ENCODE measurements at regions of chr3 and their contacts with region 1.

Region 1: DNA sequence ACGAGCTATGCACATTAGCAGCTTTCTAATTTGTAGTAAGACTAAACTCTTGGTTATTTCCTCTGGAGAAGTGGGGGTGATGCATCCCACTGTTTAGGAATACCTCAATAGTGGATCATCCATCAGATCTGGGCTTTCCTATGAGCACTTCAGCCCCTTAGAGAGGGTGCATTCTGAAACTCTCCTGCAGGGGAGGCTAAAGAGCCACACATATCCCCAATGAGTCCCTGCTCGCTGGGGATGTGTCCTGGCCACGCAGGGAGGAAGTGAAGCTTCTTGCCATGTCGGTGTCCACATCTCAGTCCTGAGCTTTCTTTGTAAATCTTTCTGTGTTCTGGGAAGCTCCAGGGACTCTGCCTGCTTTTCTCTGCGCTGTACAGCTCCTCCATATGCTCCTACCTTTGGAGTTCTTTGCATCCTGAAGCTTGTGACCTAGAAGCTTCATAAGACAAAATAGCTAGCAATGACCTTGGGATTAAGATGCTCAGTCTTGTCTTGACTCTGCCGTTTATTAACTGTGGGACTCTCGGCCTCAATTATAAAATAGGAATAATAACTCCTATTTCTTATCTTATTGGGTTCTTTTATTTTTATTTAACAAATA is 28.3 kb upstream of the MASP1 start:
- DNase-seq: peak; percentile 59
- H3K4me3 ChIP-seq: no peak overlapping the region
- H3K27ac ChIP-seq: no peak overlapping the region
- H3K4me1 ChIP-seq: peaks cover 8% of the 10 kb centered on the region
- H3K27me3 ChIP-seq: no peaks in the 10 kb centered on the region
- CTCF ChIP-seq: peak; percentile 72 to 98

Region 2: GRCh38 chr3:186849374-186849975 is 470.3 kb before region 1 on chr3:
- CTCF ChIA-PET with region 1: interaction called, 3 read pairs
- dilution Hi-C with region 1: no loop called
- in situ Hi-C with region 1: no loop called
- intact Hi-C with region 1: loop called (anchors 10 kb)
- DNase-seq: peak; percentile 45
- H3K4me3 ChIP-seq: no peak overlapping the region
- H3K27ac ChIP-seq: no peak overlapping the region
- H3K4me1 ChIP-seq: no peaks in the 10 kb centered on the region
- H3K27me3 ChIP-seq: peaks cover 2% of the 10 kb centered on the region
- CTCF ChIP-seq: peak; percentile 50 to 54

Region 3: DNA sequence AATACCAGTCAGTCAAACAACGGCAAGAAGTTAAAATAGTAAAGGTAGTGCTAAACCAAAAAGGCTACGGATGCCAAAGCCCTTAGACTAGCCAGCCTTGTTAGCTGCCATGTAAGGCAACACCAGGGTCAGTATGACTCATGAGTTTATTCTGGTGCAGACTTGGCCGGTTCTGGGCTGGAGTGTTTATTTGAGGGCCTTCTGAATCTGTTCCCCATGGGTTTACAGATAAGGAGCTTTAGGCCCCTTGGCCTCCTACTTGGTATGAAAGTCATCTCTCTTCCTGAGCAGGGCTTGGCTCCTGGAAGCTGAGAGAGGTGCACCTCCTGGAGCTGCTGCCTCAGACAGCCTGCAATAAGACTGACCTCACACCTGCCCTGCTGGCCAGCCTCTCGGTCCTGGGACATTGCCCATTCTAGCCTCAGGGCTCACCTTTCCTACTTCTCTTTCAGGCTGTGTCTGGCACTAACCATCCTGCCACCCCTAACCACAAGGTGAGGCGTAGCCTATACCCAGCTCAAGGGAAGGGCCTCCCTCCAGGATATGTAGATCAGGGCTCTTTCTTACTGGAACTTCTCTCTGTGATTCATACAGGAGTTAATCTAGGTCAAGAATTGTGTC is 132.9 kb before region 1 on chr3:
- CTCF ChIA-PET with region 1: no interaction called
- dilution Hi-C with region 1: no loop called
- in situ Hi-C with region 1: no loop called
- intact Hi-C with region 1: no loop called
- DNase-seq: peak; percentile 83
- H3K4me3 ChIP-seq: no peak overlapping the region
- H3K27ac ChIP-seq: peak overlapping the region; percentile 29
- H3K4me1 ChIP-seq: peaks cover 54% of the 10 kb centered on the region
- H3K27me3 ChIP-seq: no peaks in the 10 kb centered on the region
- CTCF ChIP-seq: no peak

Region 4: DNA sequence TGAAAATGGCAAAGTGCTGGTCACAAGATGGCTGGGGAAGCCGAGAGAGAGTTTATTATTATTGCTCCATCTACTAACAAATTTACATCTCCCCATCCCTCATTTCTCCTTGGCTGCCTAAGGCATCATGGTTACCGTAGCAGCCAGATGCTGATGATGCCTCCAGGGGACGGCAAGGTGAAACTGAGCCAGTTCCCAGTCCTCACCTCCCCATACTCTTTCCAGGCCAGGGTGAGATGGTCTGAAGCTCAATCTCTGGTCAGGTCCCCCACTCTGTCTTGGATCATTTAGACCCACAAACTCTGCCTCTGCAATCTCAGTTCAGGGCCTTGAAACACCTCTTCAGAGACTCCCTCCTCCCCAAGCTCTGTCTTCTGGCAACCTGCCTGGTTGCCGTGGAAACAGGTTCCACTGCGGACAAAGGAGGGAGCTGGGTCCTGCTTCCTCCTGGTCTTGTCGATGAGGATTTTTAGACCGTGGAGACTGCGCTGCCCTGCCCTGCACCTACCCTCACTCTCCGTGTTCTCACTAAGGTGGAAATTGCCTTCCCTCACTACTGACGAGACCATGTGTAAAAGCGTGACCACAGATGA is 122.6 kb before region 1 on chr3 and contains the start of gene RTP1:
- CTCF ChIA-PET with region 1: no interaction called
- dilution Hi-C with region 1: no loop called
- in situ Hi-C with region 1: no loop called
- intact Hi-C with region 1: loop called (anchors 1 kb)
- DNase-seq: no peak
- H3K4me3 ChIP-seq: no peak within 1 kb of the TSS
- H3K27ac ChIP-seq: no peak within 1 kb of the TSS
- H3K4me1 ChIP-seq: no peaks in the 10 kb centered on the region
- H3K27me3 ChIP-seq: no peaks in the 10 kb centered on the region
- CTCF ChIP-seq: no peak
- total RNA-seq, gene RTP1: not detected

Region 5: DNA sequence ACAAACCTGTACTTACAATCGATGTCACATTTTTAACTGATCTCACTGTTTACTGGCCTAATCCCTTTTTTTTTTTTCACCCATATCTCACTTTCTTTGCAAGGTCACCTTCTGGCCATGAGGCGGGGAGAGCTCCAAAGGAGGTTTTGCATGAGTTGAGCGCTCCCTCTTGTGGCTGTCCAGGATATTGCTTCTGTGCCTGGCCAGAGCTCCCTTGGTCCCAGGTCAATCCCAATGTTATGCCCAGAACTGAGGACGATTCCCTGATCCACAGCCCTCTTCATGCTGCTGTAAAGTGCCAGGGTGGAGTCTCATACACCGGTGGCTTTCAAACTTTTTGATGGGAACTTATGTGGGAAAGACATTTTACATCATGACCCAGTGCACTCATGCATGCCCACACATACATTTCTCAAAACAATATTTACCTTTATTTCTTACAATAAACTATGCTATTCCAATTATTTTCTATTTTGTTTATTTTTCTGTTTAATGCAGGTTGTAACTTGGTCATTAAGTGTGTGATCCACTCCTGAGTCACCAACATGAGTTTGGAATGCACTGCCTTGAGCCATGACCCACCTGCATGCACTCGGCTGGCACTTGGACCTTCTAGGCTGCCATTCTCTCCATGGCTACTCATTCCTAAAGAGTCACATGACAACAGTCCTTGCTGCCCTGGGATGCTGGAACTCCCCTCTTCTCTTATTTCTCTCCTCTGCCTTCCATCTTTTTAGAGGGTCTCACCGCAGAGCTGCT is 360.0 kb after region 1 on chr3:
- CTCF ChIA-PET with region 1: interaction called, 30 read pairs
- dilution Hi-C with region 1: loop called (anchors 10 kb)
- in situ Hi-C with region 1: loop called (anchors 5 kb)
- intact Hi-C with region 1: loop called (anchors 1 kb)
- DNase-seq: peak; percentile 48
- H3K4me3 ChIP-seq: no peak overlapping the region
- H3K27ac ChIP-seq: no peak overlapping the region
- H3K4me1 ChIP-seq: peaks cover 5% of the 10 kb centered on the region
- H3K27me3 ChIP-seq: peaks cover 14% of the 10 kb centered on the region
- CTCF ChIP-seq: peak; percentile 86 to 95

Region 6: GRCh38 chr3:189148081-189148507 is 1828.3 kb after region 1 on chr3:
- CTCF ChIA-PET with region 1: no interaction called
- dilution Hi-C with region 1: no loop called
- in situ Hi-C with region 1: no loop called
- intact Hi-C with region 1: loop called (anchors 10 kb)
- DNase-seq: peak; percentile 37
- H3K4me3 ChIP-seq: no peak overlapping the region
- H3K27ac ChIP-seq: no peak overlapping the region
- H3K4me1 ChIP-seq: no peaks in the 10 kb centered on the region
- H3K27me3 ChIP-seq: no peaks in the 10 kb centered on the region
- CTCF ChIP-seq: peak; percentile 76 to 86

Measured in mammary epithelial cell (primary cell).